ENCODE measurements at regions of chr5 and their contacts with region 1.

Region 1: DNA sequence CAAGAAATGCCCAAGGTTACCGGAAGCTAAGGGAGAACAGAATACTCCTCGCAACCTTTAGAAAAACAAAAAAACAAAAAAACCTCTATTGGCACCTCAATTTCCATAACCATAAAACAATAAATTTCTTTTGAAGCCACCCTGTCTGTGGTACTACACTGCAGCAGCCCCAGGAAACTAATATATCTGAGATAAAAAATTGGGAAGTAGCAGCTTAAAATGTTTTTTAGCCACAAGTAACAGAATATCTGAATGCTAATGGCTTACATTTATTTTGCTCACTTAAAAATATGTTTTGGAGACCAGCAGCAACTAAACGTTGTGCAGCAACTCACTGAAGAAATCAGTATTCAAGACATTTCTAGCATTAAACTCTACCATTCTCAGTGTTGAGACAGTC is 969.6 kb downstream of the DNAH5 start:
- DNase-seq: no peak
- ATAC-seq: no peak
- H3K4me3 ChIP-seq: no peak overlapping the region
- H3K4me3 Mint-ChIP-seq: no peak overlapping the region
- H3K27ac ChIP-seq: no peak overlapping the region
- H3K27ac Mint-ChIP-seq: no peak overlapping the region
- H3K4me1 ChIP-seq: no peaks in the 10 kb centered on the region
- H3K4me1 Mint-ChIP-seq: no peaks in the 10 kb centered on the region
- H3K27me3 ChIP-seq: no peaks in the 10 kb centered on the region
- H3K27me3 Mint-ChIP-seq: no peaks in the 10 kb centered on the region

Region 2: DNA sequence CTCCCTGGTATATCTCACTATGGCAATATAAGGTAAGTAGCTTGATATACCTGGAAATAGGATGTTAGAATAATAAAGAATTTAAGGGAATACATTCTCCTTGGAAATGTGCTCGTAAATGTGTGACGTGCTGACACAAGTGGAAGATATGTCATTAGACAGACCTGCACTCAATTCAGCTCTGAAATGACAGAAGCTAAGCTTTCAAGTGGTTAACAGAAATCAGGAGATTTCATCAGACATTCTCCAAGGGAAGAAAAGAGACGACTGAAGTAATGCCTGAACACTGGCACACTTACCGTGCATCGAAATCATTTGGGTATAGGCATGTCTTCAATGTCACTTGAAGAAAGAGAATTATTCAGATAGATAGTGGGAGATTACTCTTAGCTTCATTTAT is 137.3 kb before region 1 on chr5:
- CTCF ChIA-PET with region 1: interaction called in 1 of 2 experiments, 13 read pairs
- POLR2A ChIA-PET with region 1: no interaction called
- DNase-seq: no peak
- ATAC-seq: no peak
- H3K4me3 ChIP-seq: no peak overlapping the region
- H3K4me3 Mint-ChIP-seq: no peak overlapping the region
- H3K27ac ChIP-seq: no peak overlapping the region
- H3K27ac Mint-ChIP-seq: no peak overlapping the region
- H3K4me1 ChIP-seq: no peaks in the 10 kb centered on the region
- H3K4me1 Mint-ChIP-seq: no peaks in the 10 kb centered on the region
- H3K27me3 ChIP-seq: no peaks in the 10 kb centered on the region
- H3K27me3 Mint-ChIP-seq: no peaks in the 10 kb centered on the region